ENCODE measurements at regions of chr13 and their contacts with region 1.

Region 1: GRCh38 chr13:28138012-28138755 is at the start of gene PAN3:
- DNase-seq: peak; percentile 91 to 94 (median 92)
- H3K4me3 ChIP-seq: peak within 1 kb of the TSS; percentile 62 to 67
- H3K4me3 Mint-ChIP-seq: peak within 1 kb of the TSS; percentile 91 to 99 (median 96)
- H3K27ac ChIP-seq: peak within 1 kb of the TSS; percentile 97
- H3K27ac Mint-ChIP-seq: peak within 1 kb of the TSS; percentile 93 to 99 (median 98)
- H3K4me1 ChIP-seq: peaks cover 44% of the 10 kb centered on the region
- H3K4me1 Mint-ChIP-seq: peaks cover 37 to 62% (median 45%) of the 10 kb centered on the region in 4 donors
- H3K27me3 ChIP-seq: no peaks in the 10 kb centered on the region
- H3K27me3 Mint-ChIP-seq: peaks cover 0 to 2% of the 10 kb centered on the region in 2 donors
- total RNA-seq, gene PAN3: 66.0 to 66.7 TPM

Region 2: GRCh38 chr13:27171827-27172494 is 966.2 kb before region 1 on chr13:
- CTCF ChIA-PET with region 1: no interaction called
- POLR2A ChIA-PET with region 1: interaction called, 3 read pairs
- intact Hi-C with region 1: loop called (anchors 5 kb)
- DNase-seq: peak; percentile 92 to 94 (median 93)
- H3K4me3 ChIP-seq: peak overlapping the region; percentile 15 to 63
- H3K4me3 Mint-ChIP-seq: peak overlapping the region; percentile 82 to 96 (median 90)
- H3K27ac ChIP-seq: peak overlapping the region; percentile 95
- H3K27ac Mint-ChIP-seq: peak overlapping the region; percentile 84 to 99 (median 96)
- H3K4me1 ChIP-seq: peaks cover 37% of the 10 kb centered on the region
- H3K4me1 Mint-ChIP-seq: peaks cover 31 to 46% (median 39%) of the 10 kb centered on the region in 4 donors
- H3K27me3 ChIP-seq: no peaks in the 10 kb centered on the region
- H3K27me3 Mint-ChIP-seq: no peaks in the 10 kb centered on the region

Region 3: DNA sequence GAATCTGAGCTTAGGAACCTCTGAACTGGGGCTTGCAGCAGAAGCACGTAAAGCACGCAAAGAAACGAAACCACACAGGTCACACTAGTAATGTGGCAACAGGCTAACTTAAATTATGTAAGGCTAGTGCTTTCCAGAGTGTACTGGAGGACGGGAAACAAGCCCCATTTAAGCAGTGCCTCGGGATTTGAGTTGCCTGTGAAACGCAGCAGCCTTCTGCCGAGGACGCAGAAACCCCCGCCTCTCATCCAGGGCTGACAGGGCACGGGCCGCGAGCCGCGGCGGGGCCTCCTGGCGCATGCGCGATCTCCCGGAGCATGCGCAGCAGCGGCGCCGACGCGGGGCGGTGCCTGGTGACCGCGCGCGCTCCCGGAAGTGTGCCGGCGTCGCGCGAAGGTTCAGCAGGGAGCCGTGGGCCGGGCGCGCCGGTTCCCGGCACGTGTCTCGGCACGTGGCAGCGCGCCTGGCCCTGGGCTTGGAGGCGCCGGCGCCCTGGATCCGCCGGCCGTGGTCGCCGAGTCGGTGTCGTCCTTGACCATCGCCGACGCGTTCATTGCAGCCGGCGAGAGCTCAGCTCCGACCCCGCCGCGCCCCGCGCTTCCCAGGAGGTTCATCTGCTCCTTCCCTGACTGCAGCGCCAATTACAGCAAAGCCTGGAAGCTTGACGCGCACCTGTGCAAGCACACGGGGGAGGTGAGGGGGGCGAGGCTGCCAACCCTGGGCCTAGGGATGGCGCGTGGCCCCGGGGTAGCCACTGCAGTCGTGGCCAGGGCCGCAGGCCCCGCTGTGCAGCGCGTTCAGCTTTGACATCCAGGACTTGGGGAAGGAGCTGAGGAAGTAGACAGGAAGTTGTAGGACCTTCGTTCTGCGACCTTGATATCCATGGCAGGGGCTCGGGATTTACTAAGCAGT is 713.7 kb before region 1 on chr13 and contains the start of gene GTF3A:
- CTCF ChIA-PET with region 1: no interaction called
- POLR2A ChIA-PET with region 1: interaction called, 17 read pairs
- intact Hi-C with region 1: loop called (anchors 1 kb)
- DNase-seq: peak; percentile 85 to 96 (median 92)
- H3K4me3 ChIP-seq: peak within 1 kb of the TSS; percentile 66 to 89
- H3K4me3 Mint-ChIP-seq: peak within 1 kb of the TSS; percentile 87 to 96 (median 94)
- H3K27ac ChIP-seq: peak within 1 kb of the TSS; percentile 95
- H3K27ac Mint-ChIP-seq: peak within 1 kb of the TSS; percentile 89 to 99 (median 97)
- H3K4me1 ChIP-seq: peaks cover 51% of the 10 kb centered on the region
- H3K4me1 Mint-ChIP-seq: peaks cover 27 to 53% (median 40%) of the 10 kb centered on the region in 4 donors
- H3K27me3 ChIP-seq: no peaks in the 10 kb centered on the region
- H3K27me3 Mint-ChIP-seq: no peaks in the 10 kb centered on the region
- total RNA-seq, gene GTF3A: 225 to 236 TPM

Region 4: DNA sequence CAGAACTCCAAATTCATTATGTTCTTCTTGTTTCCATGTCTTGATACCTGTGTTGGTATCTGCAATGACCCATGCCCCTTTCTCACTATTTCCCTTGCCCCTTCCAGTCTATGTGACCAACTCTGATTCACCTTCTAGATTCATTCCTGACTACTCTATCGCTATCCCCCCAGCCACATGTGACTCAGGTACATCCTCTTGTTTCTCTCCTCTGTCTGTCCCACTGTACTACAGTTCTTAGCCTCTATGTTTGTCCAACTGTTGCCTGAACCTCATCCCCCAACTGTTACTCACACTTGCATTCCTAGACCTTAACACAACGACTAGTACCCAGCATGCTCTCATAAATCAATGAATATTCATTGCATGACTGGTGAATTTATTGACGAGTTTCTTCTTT is 27.8 kb before region 1 on chr13:
- CTCF ChIA-PET with region 1: no interaction called
- POLR2A ChIA-PET with region 1: no interaction called
- intact Hi-C with region 1: no loop called
- DNase-seq: no peak
- H3K4me3 ChIP-seq: no peak overlapping the region
- H3K4me3 Mint-ChIP-seq: no peak overlapping the region
- H3K27ac ChIP-seq: no peak overlapping the region
- H3K27ac Mint-ChIP-seq: peak overlapping the region in 1 of 7 donors; percentile 3
- H3K4me1 ChIP-seq: no peaks in the 10 kb centered on the region
- H3K4me1 Mint-ChIP-seq: no peaks in the 10 kb centered on the region
- H3K27me3 ChIP-seq: no peaks in the 10 kb centered on the region
- H3K27me3 Mint-ChIP-seq: peaks cover 1 to 6% of the 10 kb centered on the region in 2 donors

Region 5: DNA sequence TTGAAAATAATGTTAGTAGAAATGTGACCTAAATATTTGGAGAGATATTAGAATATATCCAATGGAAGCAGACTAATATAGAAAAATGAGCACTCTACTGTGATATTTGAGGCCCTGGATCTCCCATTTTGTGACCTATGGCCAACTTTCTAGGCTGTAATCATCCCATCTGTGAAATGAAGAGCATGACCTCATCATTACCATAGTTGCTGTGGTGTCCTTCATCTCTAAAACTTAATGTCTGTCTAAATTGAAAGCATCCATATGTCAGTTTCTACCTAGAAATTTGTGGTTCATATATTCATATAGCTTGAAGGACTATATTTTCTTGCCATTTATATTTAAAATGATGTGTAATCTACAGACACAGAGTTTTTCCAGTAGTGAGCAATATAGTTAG is 41.8 kb after region 1 on chr13:
- CTCF ChIA-PET with region 1: no interaction called
- POLR2A ChIA-PET with region 1: interaction called, 3 read pairs
- intact Hi-C with region 1: loop called (anchors 5 kb)
- DNase-seq: no peak
- H3K4me3 ChIP-seq: no peak overlapping the region
- H3K4me3 Mint-ChIP-seq: no peak overlapping the region
- H3K27ac ChIP-seq: no peak overlapping the region
- H3K27ac Mint-ChIP-seq: no peak overlapping the region
- H3K4me1 ChIP-seq: no peaks in the 10 kb centered on the region
- H3K4me1 Mint-ChIP-seq: peaks cover 21 to 45% (median 30%) of the 10 kb centered on the region in 4 donors
- H3K27me3 ChIP-seq: no peaks in the 10 kb centered on the region
- H3K27me3 Mint-ChIP-seq: no peaks in the 10 kb centered on the region

Region 6: GRCh38 chr13:28273919-28274318 is 135.7 kb after region 1 on chr13:
- CTCF ChIA-PET with region 1: no interaction called
- POLR2A ChIA-PET with region 1: no interaction called
- intact Hi-C with region 1: loop called (anchors 5 kb)
- DNase-seq: no peak
- H3K4me3 ChIP-seq: no peak overlapping the region
- H3K4me3 Mint-ChIP-seq: no peak overlapping the region
- H3K27ac ChIP-seq: no peak overlapping the region
- H3K27ac Mint-ChIP-seq: no peak overlapping the region
- H3K4me1 ChIP-seq: no peaks in the 10 kb centered on the region
- H3K4me1 Mint-ChIP-seq: peaks cover under 1 to 4% (median 3%) of the 10 kb centered on the region in 4 donors
- H3K27me3 ChIP-seq: no peaks in the 10 kb centered on the region
- H3K27me3 Mint-ChIP-seq: no peaks in the 10 kb centered on the region

Region 7: DNA sequence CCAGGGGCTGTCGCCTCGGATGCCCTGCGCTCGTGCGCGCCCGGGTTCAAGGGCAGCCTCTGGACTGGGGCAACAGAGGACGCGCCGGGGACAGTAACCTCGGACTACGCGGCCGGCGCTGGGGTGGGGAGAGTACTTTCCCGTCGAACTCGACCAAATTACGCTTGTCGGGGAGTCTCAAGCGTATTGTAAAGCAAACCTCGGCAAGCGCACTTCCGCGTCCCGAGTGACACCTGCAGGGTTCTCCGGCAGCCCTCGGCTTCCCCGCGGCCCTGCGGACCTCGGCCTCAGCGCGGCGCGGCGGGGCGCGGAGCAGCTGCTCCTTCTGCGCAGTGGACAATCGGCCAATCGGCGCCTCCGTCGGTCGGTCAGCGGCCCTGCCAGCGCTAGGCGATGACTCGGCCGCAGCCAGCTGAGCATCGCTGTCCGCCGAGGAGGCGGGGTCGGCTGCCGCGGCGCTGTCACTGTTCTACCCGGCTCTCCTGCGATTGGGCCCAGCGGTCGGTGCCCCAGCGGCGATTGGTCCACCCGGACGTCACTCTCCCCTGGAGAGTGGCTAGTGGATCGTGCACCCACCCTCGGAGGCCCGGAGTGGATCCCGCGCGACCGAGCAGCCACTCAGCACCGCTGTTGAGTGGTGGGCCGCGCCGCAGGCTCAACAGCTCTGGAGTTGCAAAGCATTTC is 580.5 kb after region 1 on chr13 and contains the start of gene SLC46A3:
- CTCF ChIA-PET with region 1: no interaction called
- POLR2A ChIA-PET with region 1: interaction called, 4 read pairs
- intact Hi-C with region 1: loop called (anchors 5 kb)
- DNase-seq: peak; percentile 95 to 97 (median 96)
- H3K4me3 ChIP-seq: peak within 1 kb of the TSS; percentile 15 to 86
- H3K4me3 Mint-ChIP-seq: peak within 1 kb of the TSS; percentile 92 to 97 (median 94)
- H3K27ac ChIP-seq: peak within 1 kb of the TSS; percentile 65
- H3K27ac Mint-ChIP-seq: peak within 1 kb of the TSS; percentile 90 to 98 (median 95)
- H3K4me1 ChIP-seq: peaks cover 29% of the 10 kb centered on the region
- H3K4me1 Mint-ChIP-seq: peaks cover 23 to 47% (median 31%) of the 10 kb centered on the region in 4 donors
- H3K27me3 ChIP-seq: no peaks in the 10 kb centered on the region
- H3K27me3 Mint-ChIP-seq: no peaks in the 10 kb centered on the region
- total RNA-seq, gene SLC46A3: 18.7 to 18.9 TPM

Measured in CD4-positive, alpha-beta memory T cell (primary cell).